CD4-positive, alpha-beta T cell (primary cell): ENCODE measurements at regions of chr2 and their contacts with region 1.

Region 1: DNA sequence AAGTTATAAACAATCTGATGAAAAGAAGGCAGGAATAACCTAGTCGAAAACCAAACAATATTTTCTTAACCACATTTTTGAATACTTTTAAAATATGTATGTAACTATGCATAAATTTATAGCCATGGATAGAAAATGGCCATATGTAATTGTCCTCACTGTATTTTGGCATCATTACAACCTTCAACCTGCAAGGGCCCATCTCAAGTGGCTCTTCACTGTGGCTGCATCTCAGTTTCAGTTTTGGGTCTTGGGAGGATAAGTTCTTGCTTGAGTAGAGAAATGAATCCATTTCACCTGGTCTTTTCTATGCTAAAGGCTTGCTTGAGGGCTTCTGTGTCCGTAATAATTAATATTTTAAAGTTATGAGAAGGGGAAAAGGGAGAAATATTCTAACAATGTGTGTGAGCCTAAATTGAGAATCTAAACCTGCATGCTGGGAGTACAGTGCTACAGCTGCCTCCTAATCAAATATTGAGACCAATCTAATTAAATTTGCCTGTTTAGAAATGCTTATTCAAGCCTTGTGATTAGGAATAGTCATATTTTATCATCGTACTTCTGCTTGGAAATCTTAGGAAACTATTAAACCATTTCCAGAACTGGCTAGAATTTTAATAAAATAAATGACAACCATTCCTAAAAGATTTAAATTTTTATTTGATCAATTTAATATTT is 92.5 kb downstream of the EML4 start:
- DNase-seq: no peak
- ATAC-seq: no peak
- H3K4me3 ChIP-seq: no peak overlapping the region
- H3K4me3 Mint-ChIP-seq: no peak overlapping the region
- H3K27ac ChIP-seq: no peak overlapping the region
- H3K27ac Mint-ChIP-seq: peak overlapping the region; percentile 47
- H3K4me1 ChIP-seq: peaks cover 3% of the 10 kb centered on the region
- H3K4me1 Mint-ChIP-seq: peaks cover 21% of the 10 kb centered on the region
- H3K27me3 ChIP-seq: no peaks in the 10 kb centered on the region
- H3K27me3 Mint-ChIP-seq: no peaks in the 10 kb centered on the region
- CTCF ChIP-seq: no peak

Region 2: GRCh38 chr2:42223855-42224268 is 37.8 kb before region 1 on chr2:
- CTCF ChIA-PET with region 1: no interaction called
- POLR2A ChIA-PET with region 1: no interaction called
- intact Hi-C with region 1: loop called in 1 of 2 experiments (anchors 5 kb)
- DNase-seq: no peak
- ATAC-seq: no peak
- H3K4me3 ChIP-seq: no peak overlapping the region
- H3K4me3 Mint-ChIP-seq: no peak overlapping the region
- H3K27ac ChIP-seq: no peak overlapping the region
- H3K27ac Mint-ChIP-seq: no peak overlapping the region
- H3K4me1 ChIP-seq: peaks cover 31% of the 10 kb centered on the region
- H3K4me1 Mint-ChIP-seq: peaks cover 94% of the 10 kb centered on the region
- H3K27me3 ChIP-seq: no peaks in the 10 kb centered on the region
- H3K27me3 Mint-ChIP-seq: no peaks in the 10 kb centered on the region
- CTCF ChIP-seq: no peak

Region 3: GRCh38 chr2:42303252-42303651 is 41.6 kb after region 1 on chr2:
- CTCF ChIA-PET with region 1: no interaction called
- POLR2A ChIA-PET with region 1: no interaction called
- intact Hi-C with region 1: loop called (anchors 5 kb)
- DNase-seq: no peak
- ATAC-seq: no peak
- H3K4me3 ChIP-seq: no peak overlapping the region
- H3K4me3 Mint-ChIP-seq: no peak overlapping the region
- H3K27ac ChIP-seq: no peak overlapping the region
- H3K27ac Mint-ChIP-seq: peak overlapping the region; percentile 2
- H3K4me1 ChIP-seq: peaks cover 14% of the 10 kb centered on the region
- H3K4me1 Mint-ChIP-seq: peaks cover 45% of the 10 kb centered on the region
- H3K27me3 ChIP-seq: no peaks in the 10 kb centered on the region
- H3K27me3 Mint-ChIP-seq: no peaks in the 10 kb centered on the region
- CTCF ChIP-seq: no peak

Region 4: GRCh38 chr2:42364658-42365057 is 103.0 kb after region 1 on chr2:
- CTCF ChIA-PET with region 1: no interaction called
- POLR2A ChIA-PET with region 1: no interaction called
- intact Hi-C with region 1: no loop called
- DNase-seq: no peak
- ATAC-seq: no peak
- H3K4me3 ChIP-seq: no peak overlapping the region
- H3K4me3 Mint-ChIP-seq: no peak overlapping the region
- H3K27ac ChIP-seq: no peak overlapping the region
- H3K27ac Mint-ChIP-seq: no peak overlapping the region
- H3K4me1 ChIP-seq: peaks cover 16% of the 10 kb centered on the region
- H3K4me1 Mint-ChIP-seq: peaks cover 27% of the 10 kb centered on the region
- H3K27me3 ChIP-seq: no peaks in the 10 kb centered on the region
- H3K27me3 Mint-ChIP-seq: no peaks in the 10 kb centered on the region
- CTCF ChIP-seq: no peak

Region 5: DNA sequence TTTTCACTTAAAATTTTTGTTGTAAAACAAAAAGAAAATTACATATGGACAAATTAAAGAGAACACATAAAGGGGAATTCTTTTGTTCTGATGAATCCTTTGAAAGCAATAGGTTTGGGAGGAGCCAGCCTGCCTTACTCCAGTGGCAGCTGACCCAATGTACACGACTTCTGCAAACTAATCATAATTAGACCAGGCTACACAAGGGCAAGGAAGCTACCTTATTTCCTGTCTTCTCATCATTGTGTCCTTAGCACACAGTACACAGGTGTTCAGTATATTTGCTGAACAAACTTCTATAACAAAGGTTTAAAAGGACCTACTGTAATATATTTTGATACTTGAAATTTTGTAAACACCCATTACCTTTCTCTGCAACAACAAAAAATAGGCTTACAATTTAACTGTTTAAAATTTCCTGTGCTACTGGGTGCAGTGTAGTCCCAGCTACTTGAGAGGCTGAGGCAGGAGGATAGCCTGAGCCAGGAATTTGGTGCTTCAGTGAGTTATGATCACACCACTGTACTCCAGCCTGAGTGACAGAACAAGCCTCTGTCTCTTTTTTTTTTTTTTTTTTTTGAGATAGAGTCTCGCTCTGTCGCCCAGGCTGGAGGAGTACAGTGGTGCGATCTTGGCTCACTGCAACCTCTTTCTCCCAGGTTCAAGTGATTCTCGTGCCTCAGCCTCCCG is 213.3 kb after region 1 on chr2:
- CTCF ChIA-PET with region 1: no interaction called
- POLR2A ChIA-PET with region 1: no interaction called
- intact Hi-C with region 1: no loop called
- DNase-seq: no peak
- ATAC-seq: no peak
- H3K4me3 ChIP-seq: no peak overlapping the region
- H3K4me3 Mint-ChIP-seq: no peak overlapping the region
- H3K27ac ChIP-seq: no peak overlapping the region
- H3K27ac Mint-ChIP-seq: no peak overlapping the region
- H3K4me1 ChIP-seq: no peaks in the 10 kb centered on the region
- H3K4me1 Mint-ChIP-seq: no peaks in the 10 kb centered on the region
- H3K27me3 ChIP-seq: no peaks in the 10 kb centered on the region
- H3K27me3 Mint-ChIP-seq: no peaks in the 10 kb centered on the region
- CTCF ChIP-seq: no peak

Region 6: GRCh38 chr2:42906557-42907411 is 645.1 kb after region 1 on chr2:
- CTCF ChIA-PET with region 1: no interaction called
- POLR2A ChIA-PET with region 1: no interaction called
- intact Hi-C with region 1: no loop called
- DNase-seq: no peak
- ATAC-seq: no peak
- H3K4me3 ChIP-seq: no peak overlapping the region
- H3K4me3 Mint-ChIP-seq: no peak overlapping the region
- H3K27ac ChIP-seq: no peak overlapping the region
- H3K27ac Mint-ChIP-seq: no peak overlapping the region
- H3K4me1 ChIP-seq: no peaks in the 10 kb centered on the region
- H3K4me1 Mint-ChIP-seq: no peaks in the 10 kb centered on the region
- H3K27me3 ChIP-seq: no peaks in the 10 kb centered on the region
- H3K27me3 Mint-ChIP-seq: peaks cover 11% of the 10 kb centered on the region
- CTCF ChIP-seq: no peak